Endothelial cell of umbilical vein (primary cell): ENCODE measurements at regions of chr12 and their contacts with region 1.

Region 1: DNA sequence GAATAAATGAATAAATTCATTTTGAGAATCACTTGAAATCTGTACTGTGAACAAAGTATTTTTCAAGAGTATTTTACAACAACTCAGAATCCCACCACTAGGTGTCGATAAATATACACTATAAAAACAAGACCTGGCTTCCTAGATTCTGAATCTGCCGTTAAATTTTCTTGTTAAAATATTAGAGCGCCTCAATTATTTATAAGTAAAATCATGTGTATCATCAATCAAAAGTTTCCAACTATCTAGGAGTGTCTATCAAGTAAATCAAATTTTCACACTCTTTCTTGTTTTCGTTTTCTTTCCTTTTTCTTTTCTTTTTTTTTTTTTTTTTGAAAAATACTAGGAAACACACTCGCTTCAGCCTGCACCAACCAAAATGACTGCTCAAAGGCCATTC is 179.2 kb upstream of the DCN start:
- DNase-seq: peak; percentile 68
- H3K4me3 ChIP-seq: no peak overlapping the region
- H3K27ac ChIP-seq: no peak overlapping the region
- H3K4me1 ChIP-seq: no peaks in the 10 kb centered on the region
- H3K27me3 ChIP-seq: no peaks in the 10 kb centered on the region
- CTCF ChIP-seq: peak; percentile 33 to 39
- POLR2A ChIP-seq: no peak

Region 2: DNA sequence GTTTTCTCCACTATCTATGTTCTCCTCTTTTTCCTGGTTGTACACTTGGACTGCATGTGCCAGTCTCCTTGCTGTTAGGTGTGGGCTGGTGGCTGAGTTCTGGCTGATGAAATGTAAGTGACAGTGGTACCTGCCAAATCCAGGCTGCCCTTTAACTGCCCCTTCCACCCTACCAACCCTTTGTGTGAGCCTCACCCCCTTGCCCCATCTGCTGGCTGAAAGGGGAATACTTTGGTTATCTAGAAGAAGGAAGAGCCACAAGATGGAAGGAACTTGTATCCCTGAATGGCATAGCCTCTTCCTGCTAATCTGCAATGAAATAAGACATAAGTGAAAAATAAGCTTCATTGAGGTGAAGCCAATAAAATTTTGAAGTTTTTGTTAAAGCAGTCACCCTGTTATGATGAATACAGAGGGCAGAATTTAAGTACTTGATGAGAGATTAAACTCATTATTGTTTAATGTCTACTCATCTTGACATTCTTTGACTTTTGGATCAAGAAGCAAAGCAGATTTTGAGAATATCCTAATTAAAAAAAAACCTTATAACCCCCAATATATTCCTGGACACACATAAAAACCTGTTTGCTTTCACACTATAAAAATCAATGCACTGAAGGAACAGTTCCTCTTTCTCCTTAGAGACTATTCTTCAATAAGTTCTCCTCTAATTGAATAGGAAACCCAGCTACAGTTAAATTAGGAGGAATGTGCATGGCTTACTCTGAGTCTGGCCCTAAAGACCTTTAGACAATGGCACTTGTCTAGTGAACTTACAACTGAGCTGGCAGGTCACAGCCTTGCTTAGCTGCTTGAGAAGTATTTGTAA is 1046.4 kb after region 1 on chr12:
- CTCF ChIA-PET with region 1: no interaction called
- POLR2A ChIA-PET with region 1: no interaction called
- dilution Hi-C with region 1: no loop called
- intact Hi-C with region 1: loop called (anchors 5 kb)
- DNase-seq: peak; percentile 50
- H3K4me3 ChIP-seq: no peak overlapping the region
- H3K27ac ChIP-seq: no peak overlapping the region
- H3K4me1 ChIP-seq: peaks cover 16% of the 10 kb centered on the region
- H3K27me3 ChIP-seq: peaks cover 4 to 5% of the 10 kb centered on the region in 2 experiments
- CTCF ChIP-seq: peak; percentile 28 to 45
- POLR2A ChIP-seq: no peak

Region 3: DNA sequence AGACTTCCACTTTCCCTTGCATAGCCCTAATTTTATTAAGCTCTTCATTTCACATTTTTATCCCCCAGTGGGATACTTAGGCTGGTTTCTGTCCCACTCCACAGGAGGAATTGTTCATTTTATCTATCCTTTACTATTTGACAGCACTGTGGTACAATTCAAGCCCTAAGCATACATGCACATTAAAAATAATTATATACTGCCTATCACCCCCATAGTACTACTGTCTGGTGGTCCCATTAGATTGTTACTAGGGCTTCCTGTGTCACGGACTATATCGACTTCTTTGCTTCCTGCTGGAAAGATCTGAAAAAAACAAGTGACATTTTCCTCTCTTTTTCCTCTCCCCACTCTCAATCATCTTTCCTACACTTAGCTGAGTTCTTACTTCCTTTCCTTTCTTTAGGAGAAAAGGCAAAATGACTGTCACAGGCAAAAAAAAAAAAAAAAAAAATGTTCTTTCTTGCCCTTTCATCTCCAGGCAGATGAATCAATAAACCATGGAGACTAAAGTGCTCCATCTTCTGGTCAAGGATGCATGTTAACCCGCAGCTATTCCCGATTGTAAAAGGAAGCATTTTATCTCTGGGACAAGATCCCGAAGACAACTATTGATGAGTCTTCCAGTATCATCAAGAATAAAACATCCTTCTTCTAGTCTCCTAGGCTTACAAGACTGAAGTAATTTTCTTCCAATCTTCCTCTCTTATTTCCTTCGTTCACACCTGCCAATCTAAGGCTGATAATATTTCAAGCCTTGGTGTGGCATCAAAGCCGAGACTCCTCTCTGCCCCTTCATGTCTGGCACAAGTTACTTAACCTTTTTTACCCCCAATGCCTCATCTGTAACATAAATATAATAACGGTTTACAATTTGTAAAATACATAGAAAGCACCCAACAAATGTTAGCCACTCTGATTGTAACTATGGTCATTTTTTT is 1246.6 kb after region 1 on chr12:
- CTCF ChIA-PET with region 1: interaction called, 12 read pairs
- POLR2A ChIA-PET with region 1: no interaction called
- dilution Hi-C with region 1: no loop called
- intact Hi-C with region 1: no loop called
- DNase-seq: peak; percentile 62
- H3K4me3 ChIP-seq: no peak overlapping the region
- H3K27ac ChIP-seq: no peak overlapping the region
- H3K4me1 ChIP-seq: peaks cover 4% of the 10 kb centered on the region
- H3K27me3 ChIP-seq: no peaks in the 10 kb centered on the region
- CTCF ChIP-seq: peak; percentile 34 to 38
- POLR2A ChIP-seq: no peak

Region 4: GRCh38 chr12:92649511-92650227 is 1287.8 kb after region 1 on chr12:
- CTCF ChIA-PET with region 1: interaction called, 11 read pairs
- POLR2A ChIA-PET with region 1: no interaction called
- dilution Hi-C with region 1: no loop called
- intact Hi-C with region 1: loop called (anchors 1 kb)
- DNase-seq: peak; percentile 75
- H3K4me3 ChIP-seq: no peak overlapping the region
- H3K27ac ChIP-seq: no peak overlapping the region
- H3K4me1 ChIP-seq: no peaks in the 10 kb centered on the region
- H3K27me3 ChIP-seq: no peaks in the 10 kb centered on the region
- CTCF ChIP-seq: peak; percentile 69 to 70
- POLR2A ChIP-seq: no peak